ENCODE measurements at regions of chr5 and their contacts with region 1.

Region 1: DNA sequence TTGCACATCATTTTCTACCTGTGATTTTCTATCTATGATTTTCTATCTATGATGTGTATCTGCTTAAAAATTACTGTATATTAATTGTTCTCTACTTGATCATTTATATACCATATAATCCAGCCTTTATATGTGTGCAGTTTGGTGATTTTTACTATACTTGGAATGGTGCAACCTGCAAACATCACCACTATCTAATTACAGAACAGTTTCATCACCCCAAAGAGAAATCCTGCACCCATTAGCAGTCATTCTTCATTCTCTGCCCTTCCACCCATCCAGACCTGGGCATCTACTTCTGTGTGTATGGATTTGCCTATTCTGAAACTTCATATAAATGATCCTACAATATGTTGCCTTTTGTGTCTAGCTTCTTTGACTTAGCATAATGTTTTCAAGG is 51.3 kb downstream of the CARTPT start:
- DNase-seq: no peak
- ATAC-seq: no peak
- H3K4me3 ChIP-seq: no peak overlapping the region
- H3K27ac ChIP-seq: no peak overlapping the region
- H3K4me1 ChIP-seq: no peaks in the 10 kb centered on the region
- H3K27me3 ChIP-seq: peaks cover 9% of the 10 kb centered on the region; the same call in 1 of the 2 replicates
- CTCF ChIP-seq: no peak

Region 2: GRCh38 chr5:72163349-72163983 is 393.1 kb after region 1 on chr5:
- CTCF ChIA-PET with region 1: no interaction called
- POLR2A ChIA-PET with region 1: interaction called, 14 read pairs
- in situ Hi-C with region 1: no loop called
- intact Hi-C with region 1: no loop called
- DNase-seq: no peak
- ATAC-seq: no peak
- H3K4me3 ChIP-seq: no peak overlapping the region
- H3K27ac ChIP-seq: no peak overlapping the region
- H3K4me1 ChIP-seq: no peaks in the 10 kb centered on the region
- H3K27me3 ChIP-seq: no peaks in the 10 kb centered on the region
- CTCF ChIP-seq: no peak